Naive thymus-derived CD4-positive, alpha-beta T cell (primary cell): ENCODE measurements at regions of chr2 and their contacts with region 1.

Region 1: GRCh38 chr2:210476194-210477128 is at the start of gene LANCL1:
- DNase-seq: peak; percentile 56 to 80 (median 74)
- ATAC-seq: peak; percentile 99
- H3K4me3 ChIP-seq: peak within 1 kb of the TSS; percentile 93
- H3K4me3 Mint-ChIP-seq: peak within 1 kb of the TSS; percentile 97 to 100 (median 100)
- H3K27ac ChIP-seq: peak within 1 kb of the TSS; percentile 81
- H3K27ac Mint-ChIP-seq: peak within 1 kb of the TSS; percentile 97 to 100 (median 99)
- H3K4me1 ChIP-seq: peaks cover 16 to 20% of the 10 kb centered on the region in 2 donors
- H3K4me1 Mint-ChIP-seq: peaks cover 38 to 86% (median 71%) of the 10 kb centered on the region in 7 donors
- H3K27me3 ChIP-seq: no peaks in the 10 kb centered on the region
- H3K27me3 Mint-ChIP-seq: no peaks in the 10 kb centered on the region
- total RNA-seq, gene LANCL1: 18.2 to 37.3 (median 31.5) TPM

Region 2: DNA sequence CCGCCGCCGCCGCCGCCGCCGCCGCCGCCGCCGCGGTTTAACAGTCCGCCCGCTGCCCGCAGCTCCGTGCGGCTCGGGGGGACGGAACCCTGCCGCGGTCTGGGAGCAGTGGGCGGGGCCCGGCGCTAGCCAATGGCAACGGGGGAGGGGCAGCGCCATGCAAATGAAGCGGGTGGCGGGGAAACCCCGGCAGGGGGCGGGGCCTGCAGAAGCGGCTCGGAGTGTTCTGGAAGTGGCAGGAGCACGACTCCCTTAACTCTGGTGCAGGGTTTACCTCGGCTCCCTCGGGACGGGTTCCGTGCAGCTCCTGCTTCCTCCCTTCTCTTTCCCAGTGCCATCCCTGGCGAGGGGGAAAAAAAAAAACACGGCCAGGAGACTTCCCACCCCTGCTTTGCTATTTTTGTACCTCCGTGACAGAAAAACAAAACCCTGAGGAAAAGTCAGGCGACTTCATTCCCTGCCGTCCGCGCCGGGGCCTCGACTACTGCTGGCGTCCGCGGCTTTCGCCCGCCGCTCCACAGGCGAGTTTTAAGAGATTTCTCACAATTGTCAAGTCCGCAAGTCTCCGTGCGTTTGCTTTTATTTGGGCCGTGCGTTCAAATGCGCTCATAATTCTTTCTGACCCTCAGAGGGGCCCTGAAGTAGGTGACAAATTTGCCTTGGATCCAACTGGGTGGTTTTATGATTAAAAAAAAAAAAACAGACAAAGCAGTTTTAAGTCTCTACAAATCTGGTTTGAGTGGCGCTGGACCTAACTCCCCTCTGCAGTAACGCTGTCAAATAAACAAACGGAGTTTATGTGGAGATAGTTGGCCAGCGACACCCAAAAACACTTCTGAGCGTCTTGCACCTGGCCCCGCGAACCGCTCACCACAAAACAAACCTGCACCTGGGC is 304.9 kb before region 1 on chr2 and contains the start of gene KANSL1L:
- CTCF ChIA-PET with region 1: no interaction called
- POLR2A ChIA-PET with region 1: no interaction called
- intact Hi-C with region 1: loop called (anchors 1 kb)
- DNase-seq: peak; percentile 92 to 99 (median 94)
- ATAC-seq: peak; percentile 95
- H3K4me3 ChIP-seq: peak within 1 kb of the TSS; percentile 89
- H3K4me3 Mint-ChIP-seq: peak within 1 kb of the TSS; percentile 90 to 100 (median 98)
- H3K27ac ChIP-seq: peak within 1 kb of the TSS; percentile 93
- H3K27ac Mint-ChIP-seq: peak within 1 kb of the TSS; percentile 93 to 99 (median 96)
- H3K4me1 ChIP-seq: peaks cover 6 to 7% of the 10 kb centered on the region in 2 donors
- H3K4me1 Mint-ChIP-seq: peaks cover 17 to 42% (median 33%) of the 10 kb centered on the region in 7 donors
- H3K27me3 ChIP-seq: no peaks in the 10 kb centered on the region
- H3K27me3 Mint-ChIP-seq: peaks cover 0 to 41% (median 0%) of the 10 kb centered on the region in 5 donors
- total RNA-seq, gene KANSL1L: 6.3 to 23.3 (median 13.3) TPM

Region 3: DNA sequence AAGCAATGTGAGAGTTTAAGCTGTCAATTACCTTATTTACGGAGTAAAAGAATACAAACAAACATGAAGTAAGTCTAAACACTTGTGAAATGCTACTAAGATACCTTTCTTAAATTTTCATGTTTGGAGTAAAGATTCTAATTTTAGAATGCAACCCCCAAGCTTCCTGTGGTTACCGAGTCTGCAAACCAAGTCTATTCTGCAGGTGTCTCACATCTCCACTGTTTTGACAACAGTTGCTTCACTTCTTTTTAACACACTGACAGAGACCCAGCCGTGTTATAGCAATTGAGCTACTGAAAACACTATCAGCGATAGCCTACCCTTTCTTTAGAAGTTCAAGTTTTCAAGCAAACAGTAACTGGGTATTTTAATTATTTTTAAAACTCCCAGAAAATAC is 1453.9 kb after region 1 on chr2:
- CTCF ChIA-PET with region 1: no interaction called
- POLR2A ChIA-PET with region 1: no interaction called
- intact Hi-C with region 1: no loop called
- DNase-seq: peak in 1 of 9 donors; percentile 25
- ATAC-seq: no peak
- H3K4me3 ChIP-seq: no peak overlapping the region
- H3K4me3 Mint-ChIP-seq: no peak overlapping the region
- H3K27ac ChIP-seq: no peak overlapping the region
- H3K27ac Mint-ChIP-seq: no peak overlapping the region
- H3K4me1 ChIP-seq: no peaks in the 10 kb centered on the region
- H3K4me1 Mint-ChIP-seq: no peaks in the 10 kb centered on the region
- H3K27me3 ChIP-seq: no peaks in the 10 kb centered on the region
- H3K27me3 Mint-ChIP-seq: no peaks in the 10 kb centered on the region